Caco-2 (cell line): ENCODE measurements at regions of chr4 and their contacts with region 1.

Region 1: GRCh38 chr4:145557720-145558119 is 61.5 kb upstream of the MMAA start:
- DNase-seq: peak; percentile 42 to 59
- H3K4me3 ChIP-seq: no peak overlapping the region
- H3K4me3 Mint-ChIP-seq: no peak overlapping the region
- H3K27ac Mint-ChIP-seq: no peak overlapping the region
- H3K4me1 ChIP-seq: no peaks in the 10 kb centered on the region
- H3K4me1 Mint-ChIP-seq: no peaks in the 10 kb centered on the region
- H3K27me3 ChIP-seq: no peaks in the 10 kb centered on the region
- H3K27me3 Mint-ChIP-seq: no peaks in the 10 kb centered on the region
- CTCF ChIP-seq: peak; percentile 73 to 90

Region 2: DNA sequence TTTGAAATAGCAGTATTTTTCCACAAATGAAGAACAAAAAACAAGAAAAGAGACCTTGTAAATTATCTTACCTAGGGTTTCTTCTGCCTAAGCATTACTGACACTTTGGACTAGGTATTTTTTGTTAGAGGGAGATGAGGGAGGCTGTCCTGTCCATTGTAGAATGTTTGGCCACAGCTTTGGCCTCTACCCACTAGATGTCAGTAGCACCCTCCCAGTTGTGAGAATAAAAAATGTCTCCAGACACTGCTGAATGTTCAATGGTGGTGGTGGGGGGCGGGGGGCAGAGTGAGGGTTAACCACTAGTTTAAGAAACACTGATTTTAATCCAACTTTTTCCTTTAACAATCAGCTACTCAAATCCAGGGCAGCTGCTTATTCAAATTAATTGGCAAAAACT is 403.1 kb before region 1 on chr4:
- CTCF ChIA-PET with region 1: no interaction called
- POLR2A ChIA-PET with region 1: no interaction called
- intact Hi-C with region 1: loop called (anchors 1 kb)
- DNase-seq: peak in 1 of 2 experiments; percentile 33
- H3K4me3 ChIP-seq: no peak overlapping the region
- H3K4me3 Mint-ChIP-seq: no peak overlapping the region
- H3K27ac Mint-ChIP-seq: no peak overlapping the region
- H3K4me1 ChIP-seq: no peaks in the 10 kb centered on the region
- H3K4me1 Mint-ChIP-seq: no peaks in the 10 kb centered on the region
- H3K27me3 ChIP-seq: no peaks in the 10 kb centered on the region
- H3K27me3 Mint-ChIP-seq: no peaks in the 10 kb centered on the region
- CTCF ChIP-seq: peak; percentile 25 to 65

Region 3: DNA sequence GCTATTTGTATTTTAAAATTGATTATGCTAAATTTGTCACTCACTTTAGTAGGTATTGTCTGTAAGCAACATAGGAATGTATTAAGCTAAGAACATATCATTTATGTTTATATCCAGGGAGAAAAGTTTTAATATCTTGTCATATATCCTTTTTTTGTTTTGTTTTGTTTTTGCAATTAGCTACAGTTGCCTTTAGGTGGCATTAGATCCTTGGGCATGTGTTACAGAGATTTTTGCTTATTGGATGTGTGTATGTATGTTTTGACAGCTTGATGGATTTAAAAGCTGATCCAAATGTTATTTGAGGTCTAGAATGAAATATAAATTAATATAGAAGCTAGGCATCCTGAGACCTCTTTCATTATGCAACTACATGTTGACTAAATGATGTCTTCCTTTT is 341.2 kb before region 1 on chr4:
- CTCF ChIA-PET with region 1: interaction called, 4 read pairs
- POLR2A ChIA-PET with region 1: no interaction called
- intact Hi-C with region 1: loop called (anchors 1 kb)
- DNase-seq: no peak
- H3K4me3 ChIP-seq: no peak overlapping the region
- H3K4me3 Mint-ChIP-seq: no peak overlapping the region
- H3K27ac Mint-ChIP-seq: no peak overlapping the region
- H3K4me1 ChIP-seq: no peaks in the 10 kb centered on the region
- H3K4me1 Mint-ChIP-seq: no peaks in the 10 kb centered on the region
- H3K27me3 ChIP-seq: no peaks in the 10 kb centered on the region; the same call in 1 of the 2 replicates
- H3K27me3 Mint-ChIP-seq: peaks cover 2% of the 10 kb centered on the region
- CTCF ChIP-seq: peak in 1 of 2 experiments; percentile 32

Region 4: DNA sequence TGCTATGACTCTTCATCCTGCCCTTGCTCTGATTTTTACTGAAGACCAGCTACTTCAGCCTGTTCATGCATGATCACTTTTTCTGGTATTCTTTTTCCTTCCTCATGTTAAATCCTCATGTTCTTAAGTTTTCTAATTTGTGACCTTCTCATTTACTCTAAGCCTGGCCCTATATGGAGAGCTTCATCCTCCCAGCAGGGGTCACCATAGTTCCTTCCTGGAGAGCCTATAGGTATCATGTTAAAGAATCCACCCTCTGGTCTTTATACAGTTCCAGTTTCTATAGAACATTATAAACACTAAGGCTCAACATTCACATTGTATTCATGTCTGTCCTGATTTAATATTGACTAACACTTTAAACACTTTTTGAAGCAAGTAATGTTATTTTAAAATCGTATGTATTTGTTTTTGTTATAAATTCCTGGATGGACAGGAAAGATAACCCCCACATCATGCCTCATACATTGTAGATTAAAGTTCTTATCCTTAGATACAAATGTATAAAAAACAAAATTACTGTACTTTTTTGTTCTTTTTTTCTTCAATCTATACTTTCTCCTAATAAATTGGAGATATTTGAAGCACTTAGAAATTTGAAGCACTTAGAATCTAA is 323.5 kb before region 1 on chr4:
- CTCF ChIA-PET with region 1: interaction called, 12 read pairs
- POLR2A ChIA-PET with region 1: no interaction called
- intact Hi-C with region 1: loop called (anchors 1 kb)
- DNase-seq: peak; percentile 52 to 67
- H3K4me3 ChIP-seq: no peak overlapping the region
- H3K4me3 Mint-ChIP-seq: no peak overlapping the region
- H3K27ac Mint-ChIP-seq: no peak overlapping the region
- H3K4me1 ChIP-seq: no peaks in the 10 kb centered on the region
- H3K4me1 Mint-ChIP-seq: no peaks in the 10 kb centered on the region
- H3K27me3 ChIP-seq: no peaks in the 10 kb centered on the region
- H3K27me3 Mint-ChIP-seq: peaks cover 6% of the 10 kb centered on the region
- CTCF ChIP-seq: peak; percentile 73 to 82

Region 5: DNA sequence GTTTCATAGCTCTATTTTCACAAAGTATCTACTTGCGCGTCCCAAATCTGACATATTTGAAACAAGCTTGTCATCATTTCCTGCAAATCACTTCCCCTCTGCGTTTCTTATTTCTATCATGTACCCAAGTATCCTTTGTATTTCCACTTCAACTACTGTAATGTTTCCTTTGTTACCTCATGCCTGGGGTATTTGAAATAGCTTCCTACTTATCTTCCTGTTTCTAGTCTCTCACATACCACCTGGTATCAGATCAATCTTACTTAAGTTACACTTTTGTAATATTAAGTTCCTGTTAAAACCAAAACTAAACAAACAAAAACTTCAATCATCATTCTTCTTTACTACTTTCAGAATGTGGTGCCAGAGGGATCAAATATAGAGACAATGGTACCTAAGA is 169.7 kb before region 1 on chr4:
- CTCF ChIA-PET with region 1: no interaction called
- POLR2A ChIA-PET with region 1: no interaction called
- intact Hi-C with region 1: loop called (anchors 1 kb)
- DNase-seq: no peak
- H3K4me3 ChIP-seq: no peak overlapping the region
- H3K4me3 Mint-ChIP-seq: no peak overlapping the region
- H3K27ac Mint-ChIP-seq: no peak overlapping the region
- H3K4me1 ChIP-seq: no peaks in the 10 kb centered on the region
- H3K4me1 Mint-ChIP-seq: peaks cover 7% of the 10 kb centered on the region
- H3K27me3 ChIP-seq: no peaks in the 10 kb centered on the region
- H3K27me3 Mint-ChIP-seq: peaks cover 6% of the 10 kb centered on the region
- CTCF ChIP-seq: no peak

Region 6: DNA sequence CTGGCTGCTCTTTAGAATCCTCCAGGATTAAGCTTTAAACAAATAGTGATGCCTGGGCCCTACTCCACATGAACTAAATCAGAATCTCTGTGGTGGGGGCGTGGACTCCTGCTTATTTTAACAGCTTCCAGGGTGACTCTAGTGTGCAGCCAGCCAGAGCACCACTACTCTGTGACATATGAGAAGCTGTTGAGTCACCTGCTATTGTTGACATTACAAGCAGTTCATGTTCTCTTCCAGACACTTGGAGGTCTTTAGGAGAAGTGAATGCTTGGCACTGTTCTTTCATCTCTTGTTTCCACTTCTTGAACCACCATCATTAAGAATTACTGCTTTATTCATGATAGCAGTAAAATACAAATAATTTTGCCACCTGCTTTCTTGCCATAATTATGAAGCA is 121.8 kb after region 1 on chr4:
- CTCF ChIA-PET with region 1: no interaction called
- POLR2A ChIA-PET with region 1: no interaction called
- intact Hi-C with region 1: no loop called
- DNase-seq: no peak
- H3K4me3 ChIP-seq: no peak overlapping the region
- H3K4me3 Mint-ChIP-seq: no peak overlapping the region
- H3K27ac Mint-ChIP-seq: no peak overlapping the region
- H3K4me1 ChIP-seq: no peaks in the 10 kb centered on the region
- H3K4me1 Mint-ChIP-seq: no peaks in the 10 kb centered on the region
- H3K27me3 ChIP-seq: no peaks in the 10 kb centered on the region
- H3K27me3 Mint-ChIP-seq: no peaks in the 10 kb centered on the region
- CTCF ChIP-seq: no peak

Region 7: DNA sequence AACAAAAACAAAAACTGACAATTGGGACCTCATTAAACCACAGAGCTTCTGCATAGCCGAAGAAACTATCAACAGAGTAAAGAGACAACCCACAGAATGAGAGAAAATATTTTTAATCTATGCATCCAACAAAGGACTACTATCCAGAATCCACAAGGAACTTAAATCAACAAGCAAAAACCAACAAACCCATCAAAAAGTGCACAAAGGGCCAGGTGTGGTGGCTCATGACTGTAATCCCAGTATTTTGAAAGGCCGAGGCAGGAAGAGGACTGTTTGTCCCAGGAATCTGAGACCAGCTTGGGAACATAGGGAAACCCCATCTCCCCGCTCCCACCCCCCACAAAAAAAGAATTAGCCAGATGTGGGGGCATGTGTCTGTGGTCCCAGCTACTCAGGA is 132.9 kb after region 1 on chr4:
- CTCF ChIA-PET with region 1: no interaction called
- POLR2A ChIA-PET with region 1: no interaction called
- intact Hi-C with region 1: no loop called
- DNase-seq: no peak
- H3K4me3 ChIP-seq: no peak overlapping the region
- H3K4me3 Mint-ChIP-seq: no peak overlapping the region
- H3K27ac Mint-ChIP-seq: no peak overlapping the region
- H3K4me1 ChIP-seq: no peaks in the 10 kb centered on the region
- H3K4me1 Mint-ChIP-seq: no peaks in the 10 kb centered on the region
- H3K27me3 ChIP-seq: no peaks in the 10 kb centered on the region
- H3K27me3 Mint-ChIP-seq: no peaks in the 10 kb centered on the region
- CTCF ChIP-seq: no peak